Left cardiac atrium (tissue), 4 donors: ENCODE measurements at regions of chr3 and their contacts with region 1.

Region 1: GRCh38 chr3:38533285-38533976 is 37.3 kb downstream of the EXOG start:
- DNase-seq: peak; percentile 79
- ATAC-seq: peak; percentile 94 to 95

Region 2: GRCh38 chr3:38479431-38480092 is 53.9 kb before region 1 on chr3:
- intact Hi-C with region 1: no loop called
- DNase-seq: peak; percentile 65
- ATAC-seq: peak; percentile 86 to 88

Region 3: GRCh38 chr3:38725726-38726419 is 192.4 kb after region 1 on chr3:
- intact Hi-C with region 1: loop called in 1 of 2 experiments (anchors 10 kb)
- DNase-seq: peak; percentile 66
- ATAC-seq: peak; percentile 73 to 84

Region 4: DNA sequence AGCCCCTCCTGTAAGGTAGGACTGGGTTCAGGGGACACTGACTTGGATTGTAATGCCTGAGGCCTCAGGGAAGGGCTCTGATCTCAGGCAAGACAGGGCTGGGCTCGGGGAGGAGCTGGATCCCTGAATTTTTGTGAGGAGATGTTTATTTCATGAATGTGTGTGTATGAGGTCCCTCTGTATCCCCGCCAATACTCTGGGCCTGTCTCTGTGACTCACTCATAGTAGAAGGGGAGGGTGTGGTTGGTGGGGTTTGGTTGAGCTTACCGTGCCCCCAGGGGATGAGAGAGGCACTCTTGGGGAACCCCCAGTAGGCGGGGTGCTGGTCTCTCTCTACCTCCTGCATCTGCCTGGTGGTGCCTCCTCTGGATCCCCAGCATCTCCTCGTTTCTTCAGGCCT is 901.1 kb after region 1 on chr3:
- intact Hi-C with region 1: no loop called
- DNase-seq: no peak
- ATAC-seq: no peak